ENCODE measurements at regions of chr9 and their contacts with region 1.

Region 1: GRCh38 chr9:108478431-108478837 is 377.4 kb downstream of the ACTL7B start:
- DNase-seq: peak; percentile 94
- H3K4me3 ChIP-seq: no peak overlapping the region
- H3K27ac ChIP-seq: peak overlapping the region; percentile 95
- H3K4me1 ChIP-seq: peaks cover 48% of the 10 kb centered on the region
- H3K27me3 ChIP-seq: no peaks in the 10 kb centered on the region
- CTCF ChIP-seq: peak in 1 of 2 donors; percentile 23

Region 2: DNA sequence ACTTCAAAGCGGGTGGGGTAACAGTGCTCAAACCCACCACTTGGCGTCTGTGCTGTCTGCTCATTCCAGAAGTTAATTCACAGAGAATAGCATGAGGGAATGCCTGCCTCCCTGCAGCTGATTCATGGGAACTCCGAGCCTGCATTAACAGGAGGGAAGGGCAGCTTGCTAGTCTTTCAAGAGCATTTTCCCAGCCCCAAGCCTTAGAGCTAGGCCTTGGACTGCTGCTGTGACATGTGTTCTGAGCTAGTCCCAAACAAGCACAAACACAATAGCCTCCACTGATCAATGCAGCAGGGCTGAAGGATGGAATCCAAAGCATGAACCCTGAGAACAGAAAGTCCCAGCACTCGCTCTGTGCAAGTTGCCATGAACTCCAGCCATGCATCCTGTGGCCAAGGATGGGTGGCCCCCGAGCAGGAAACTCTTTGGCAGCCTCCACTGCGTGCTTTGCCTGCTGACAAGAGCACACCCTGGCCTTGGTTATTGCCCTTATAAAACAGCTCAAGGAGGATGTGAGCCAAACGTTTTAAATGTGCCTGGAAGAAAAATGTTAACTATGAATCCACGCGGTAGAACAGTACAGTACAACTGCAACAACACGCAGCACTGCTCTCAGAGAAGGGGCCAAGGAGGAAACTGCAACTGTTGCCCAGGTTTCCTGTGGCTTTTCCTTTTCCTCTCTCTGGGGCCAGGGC is 335.8 kb before region 1 on chr9:
- CTCF ChIA-PET with region 1: no interaction called
- dilution Hi-C with region 1: no loop called
- in situ Hi-C with region 1: no loop called
- intact Hi-C with region 1: no loop called
- DNase-seq: no peak
- H3K4me3 ChIP-seq: no peak overlapping the region
- H3K27ac ChIP-seq: no peak overlapping the region
- H3K4me1 ChIP-seq: peaks cover 10% of the 10 kb centered on the region
- H3K27me3 ChIP-seq: no peaks in the 10 kb centered on the region
- CTCF ChIP-seq: no peak

Region 3: DNA sequence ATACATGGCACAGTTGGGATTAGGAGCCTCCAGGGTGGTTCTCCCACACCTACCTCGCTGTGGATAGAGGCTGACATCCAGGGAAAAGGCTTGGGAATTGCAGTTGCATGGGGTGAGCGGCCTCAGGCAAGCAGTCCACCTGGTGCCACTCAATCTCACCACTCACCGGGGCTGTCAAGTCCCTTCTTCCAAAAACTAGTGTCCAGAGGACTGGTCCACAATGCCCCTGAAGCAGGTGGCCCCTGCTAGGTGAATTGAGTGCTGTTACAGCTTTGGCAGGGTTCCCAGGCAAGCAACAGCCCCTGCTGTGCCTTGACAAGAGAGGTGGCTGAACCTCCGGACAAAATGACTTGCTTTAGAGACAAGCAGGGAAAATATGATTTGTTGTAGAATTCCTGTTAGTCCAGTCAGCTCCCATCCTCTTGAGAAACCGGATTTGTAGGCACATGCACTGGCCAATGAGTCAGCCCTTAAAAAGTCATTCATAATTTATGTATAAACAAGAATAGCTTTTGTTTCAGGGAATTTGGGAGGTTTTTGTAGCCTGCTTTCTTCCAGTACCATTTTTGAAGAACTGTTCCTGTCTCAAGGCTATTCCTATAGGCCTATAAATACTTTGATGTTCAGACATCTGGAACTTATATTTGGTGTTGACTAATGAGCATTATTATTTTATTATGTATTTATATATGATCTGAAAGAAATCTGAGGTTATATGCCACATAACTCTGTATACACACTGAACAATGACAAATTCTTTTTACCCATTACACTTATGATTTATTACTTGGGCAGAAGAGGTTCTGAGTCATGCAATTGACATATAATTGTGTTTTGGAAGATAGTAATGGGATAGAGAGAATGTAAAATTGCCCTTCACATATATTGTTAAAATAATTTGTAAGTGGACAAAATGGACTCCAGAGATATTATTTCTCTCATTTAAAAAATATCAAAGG is 33.8 kb before region 1 on chr9:
- CTCF ChIA-PET with region 1: no interaction called
- dilution Hi-C with region 1: no loop called
- in situ Hi-C with region 1: no loop called
- intact Hi-C with region 1: loop called (anchors 1 kb)
- DNase-seq: peak; percentile 91
- H3K4me3 ChIP-seq: peak overlapping the region; percentile 3 to 42 (median 38)
- H3K27ac ChIP-seq: peak overlapping the region; percentile 84
- H3K4me1 ChIP-seq: peaks cover 37% of the 10 kb centered on the region
- H3K27me3 ChIP-seq: no peaks in the 10 kb centered on the region
- CTCF ChIP-seq: no peak

Region 4: DNA sequence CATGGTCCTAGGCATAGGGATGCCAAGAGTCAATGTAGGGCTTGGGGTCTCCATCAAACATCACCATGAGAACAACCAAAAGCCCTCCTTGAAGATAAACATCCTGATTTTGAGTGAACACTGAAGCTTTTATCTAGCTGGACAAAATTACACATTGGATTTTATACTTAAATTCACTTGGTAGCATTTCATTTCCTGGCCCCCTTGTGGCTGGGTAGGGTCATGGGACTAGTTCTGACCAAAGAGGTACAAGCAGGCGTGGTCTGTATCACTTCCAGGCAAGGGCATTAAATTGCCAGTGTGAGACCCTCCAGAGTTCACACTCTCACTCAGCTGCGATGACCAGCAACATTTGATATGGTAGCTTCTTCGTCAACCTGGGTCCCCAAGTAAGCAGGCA is 57.1 kb after region 1 on chr9:
- CTCF ChIA-PET with region 1: no interaction called
- dilution Hi-C with region 1: loop called (anchors 5 kb)
- in situ Hi-C with region 1: loop called in 1 of 2 experiments (anchors 10 kb)
- intact Hi-C with region 1: no loop called
- DNase-seq: no peak
- H3K4me3 ChIP-seq: no peak overlapping the region
- H3K27ac ChIP-seq: peak overlapping the region; percentile 91
- H3K4me1 ChIP-seq: peaks cover 29% of the 10 kb centered on the region
- H3K27me3 ChIP-seq: no peaks in the 10 kb centered on the region
- CTCF ChIP-seq: peak; percentile 17 to 25

Region 5: GRCh38 chr9:108543251-108543768 is 64.9 kb after region 1 on chr9:
- CTCF ChIA-PET with region 1: no interaction called
- dilution Hi-C with region 1: loop called (anchors 5 kb)
- in situ Hi-C with region 1: loop called (anchors 5 to 10 kb)
- intact Hi-C with region 1: loop called (anchors 1 kb)
- DNase-seq: peak; percentile 99
- H3K4me3 ChIP-seq: no peak overlapping the region
- H3K27ac ChIP-seq: peak overlapping the region; percentile 96
- H3K4me1 ChIP-seq: peaks cover 25% of the 10 kb centered on the region
- H3K27me3 ChIP-seq: no peaks in the 10 kb centered on the region
- CTCF ChIP-seq: peak in 1 of 2 donors; percentile 14

Region 6: GRCh38 chr9:108551030-108551838 is 72.8 kb after region 1 on chr9:
- CTCF ChIA-PET with region 1: interaction called, 8 read pairs
- dilution Hi-C with region 1: no loop called
- in situ Hi-C with region 1: loop called (anchors 5 to 10 kb)
- intact Hi-C with region 1: loop called (anchors 1 kb)
- DNase-seq: peak; percentile 98
- H3K4me3 ChIP-seq: peak overlapping the region in 1 of 3 experiments; percentile 9
- H3K27ac ChIP-seq: peak overlapping the region; percentile 99
- H3K4me1 ChIP-seq: peaks cover 60% of the 10 kb centered on the region
- H3K27me3 ChIP-seq: no peaks in the 10 kb centered on the region
- CTCF ChIP-seq: peak in 1 of 2 donors; percentile 10

Region 7: GRCh38 chr9:108645520-108645919 is 167.1 kb after region 1 on chr9:
- CTCF ChIA-PET with region 1: no interaction called
- dilution Hi-C with region 1: no loop called
- in situ Hi-C with region 1: no loop called
- intact Hi-C with region 1: no loop called
- DNase-seq: peak; percentile 72
- H3K4me3 ChIP-seq: no peak overlapping the region
- H3K27ac ChIP-seq: no peak overlapping the region
- H3K4me1 ChIP-seq: peaks cover 19% of the 10 kb centered on the region
- H3K27me3 ChIP-seq: no peaks in the 10 kb centered on the region
- CTCF ChIP-seq: no peak

Measured in mammary epithelial cell (primary cell).